ENCODE measurements at regions of chr6 and their contacts with region 1.

Region 1: GRCh38 chr6:130293800-130294199 is 71.0 kb upstream of the SAMD3 start:
- DNase-seq: peak; percentile 65
- ATAC-seq: peak; percentile 84
- H3K4me3 Mint-ChIP-seq: no peak overlapping the region
- H3K27ac Mint-ChIP-seq: no peak overlapping the region
- H3K4me1 Mint-ChIP-seq: no peaks in the 10 kb centered on the region
- H3K27me3 Mint-ChIP-seq: peaks cover 6% of the 10 kb centered on the region

Region 2: GRCh38 chr6:129936329-129937165 is 357.3 kb before region 1 on chr6:
- CTCF ChIA-PET with region 1: no interaction called
- POLR2A ChIA-PET with region 1: no interaction called
- DNase-seq: peak; percentile 55
- ATAC-seq: no peak
- H3K4me3 Mint-ChIP-seq: no peak overlapping the region
- H3K27ac Mint-ChIP-seq: no peak overlapping the region
- H3K4me1 Mint-ChIP-seq: no peaks in the 10 kb centered on the region
- H3K27me3 Mint-ChIP-seq: peaks cover 23% of the 10 kb centered on the region

Region 3: GRCh38 chr6:130322673-130323268 is 29.0 kb after region 1 on chr6:
- CTCF ChIA-PET with region 1: interaction called, 16 read pairs
- POLR2A ChIA-PET with region 1: no interaction called
- DNase-seq: peak; percentile 71
- ATAC-seq: no peak
- H3K4me3 Mint-ChIP-seq: no peak overlapping the region
- H3K27ac Mint-ChIP-seq: no peak overlapping the region
- H3K4me1 Mint-ChIP-seq: peaks cover 15% of the 10 kb centered on the region
- H3K27me3 Mint-ChIP-seq: peaks cover 11% of the 10 kb centered on the region